CD8-positive, alpha-beta T cell (primary cell): ENCODE measurements at regions of chr9 and their contacts with region 1.

Region 1: GRCh38 chr9:98791147-98792095 is 4.9 kb downstream of the ANKS6 start:
- DNase-seq: peak; percentile 21 to 73 (median 53)
- ATAC-seq: peak; percentile 75
- H3K4me3 ChIP-seq: no peak overlapping the region
- H3K4me3 Mint-ChIP-seq: no peak overlapping the region
- H3K27ac ChIP-seq: no peak overlapping the region
- H3K27ac Mint-ChIP-seq: no peak overlapping the region
- H3K4me1 ChIP-seq: peaks cover 15% of the 10 kb centered on the region
- H3K4me1 Mint-ChIP-seq: peaks cover 31% of the 10 kb centered on the region
- H3K27me3 ChIP-seq: no peaks in the 10 kb centered on the region
- H3K27me3 Mint-ChIP-seq: no peaks in the 10 kb centered on the region
- CTCF ChIP-seq: peak; percentile 91

Region 2: GRCh38 chr9:98315551-98316060 is 475.8 kb before region 1 on chr9:
- CTCF ChIA-PET with region 1: interaction called, 4 read pairs
- POLR2A ChIA-PET with region 1: no interaction called
- intact Hi-C with region 1: loop called in 1 of 2 experiments (anchors 1 kb)
- DNase-seq: peak; percentile 59 to 83 (median 77)
- ATAC-seq: peak; percentile 79
- H3K4me3 ChIP-seq: no peak overlapping the region
- H3K4me3 Mint-ChIP-seq: no peak overlapping the region
- H3K27ac ChIP-seq: no peak overlapping the region
- H3K27ac Mint-ChIP-seq: no peak overlapping the region
- H3K4me1 ChIP-seq: no peaks in the 10 kb centered on the region
- H3K4me1 Mint-ChIP-seq: peaks cover 4% of the 10 kb centered on the region
- H3K27me3 ChIP-seq: no peaks in the 10 kb centered on the region
- H3K27me3 Mint-ChIP-seq: no peaks in the 10 kb centered on the region
- CTCF ChIP-seq: peak; percentile 68

Region 3: DNA sequence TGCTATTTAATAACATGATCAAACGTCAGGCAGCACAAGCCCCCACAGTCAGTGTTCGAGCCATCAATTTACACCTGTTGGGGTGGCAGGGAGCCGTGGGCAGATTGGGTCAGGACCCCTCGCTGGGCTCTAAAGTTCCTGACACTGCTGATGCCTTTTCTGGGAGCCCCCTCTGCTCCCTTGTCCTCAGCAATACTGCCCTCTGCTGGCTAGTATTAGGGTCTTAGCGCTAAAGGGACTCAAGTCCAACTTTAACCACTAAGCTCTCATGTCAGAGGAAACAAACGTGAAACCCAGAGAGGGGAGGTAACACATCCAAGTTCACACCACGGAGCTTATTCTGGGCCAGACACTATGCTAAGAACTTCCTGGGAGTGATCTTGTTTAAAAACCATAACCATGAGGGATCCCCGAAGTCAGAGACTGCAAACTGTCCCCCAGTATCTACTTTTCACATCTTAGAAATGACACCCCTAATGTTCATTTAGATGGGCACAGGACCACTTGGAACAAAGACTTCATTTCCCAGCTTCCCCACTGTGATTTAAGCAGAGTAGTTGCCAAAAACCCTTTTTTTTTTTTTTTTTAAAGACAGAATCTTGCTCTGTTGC is 15.5 kb before region 1 on chr9:
- CTCF ChIA-PET with region 1: interaction called, 35 read pairs
- POLR2A ChIA-PET with region 1: no interaction called
- intact Hi-C with region 1: no loop called
- DNase-seq: peak in 4 of 9 experiments; percentile 28 to 59 (median 46)
- ATAC-seq: no peak
- H3K4me3 ChIP-seq: no peak overlapping the region
- H3K4me3 Mint-ChIP-seq: no peak overlapping the region
- H3K27ac ChIP-seq: no peak overlapping the region
- H3K27ac Mint-ChIP-seq: no peak overlapping the region
- H3K4me1 ChIP-seq: no peaks in the 10 kb centered on the region
- H3K4me1 Mint-ChIP-seq: no peaks in the 10 kb centered on the region
- H3K27me3 ChIP-seq: no peaks in the 10 kb centered on the region
- H3K27me3 Mint-ChIP-seq: no peaks in the 10 kb centered on the region
- CTCF ChIP-seq: no peak